PC-9 (cell line): ENCODE measurements at regions of chr9 and their contacts with region 1.

Region 1: GRCh38 chr9:121350993-121351561 is 19.0 kb downstream of the STOM start:
- DNase-seq: peak; percentile 72 to 77
- H3K4me3 ChIP-seq: no peak overlapping the region
- H3K27ac ChIP-seq: peak overlapping the region; percentile 35; the same call in 1 of the 2 replicates
- H3K4me1 ChIP-seq: peaks cover 15% of the 10 kb centered on the region
- H3K27me3 ChIP-seq: no peaks in the 10 kb centered on the region
- CTCF ChIP-seq: no peak

Region 2: GRCh38 chr9:121233906-121234901 is 116.9 kb before region 1 on chr9:
- CTCF ChIA-PET with region 1: no interaction called
- POLR2A ChIA-PET with region 1: no interaction called
- intact Hi-C with region 1: loop called (anchors 1 kb)
- DNase-seq: peak; percentile 78 to 97
- H3K4me3 ChIP-seq: no peak overlapping the region
- H3K27ac ChIP-seq: peak overlapping the region; percentile 94
- H3K4me1 ChIP-seq: peaks cover 32% of the 10 kb centered on the region
- H3K27me3 ChIP-seq: no peaks in the 10 kb centered on the region
- CTCF ChIP-seq: no peak

Region 3: GRCh38 chr9:121376214-121376830 is 25.2 kb after region 1 on chr9:
- CTCF ChIA-PET with region 1: interaction called, 12 read pairs
- POLR2A ChIA-PET with region 1: interaction called, 4 read pairs
- intact Hi-C with region 1: no loop called
- DNase-seq: no peak
- H3K4me3 ChIP-seq: no peak overlapping the region
- H3K27ac ChIP-seq: no peak overlapping the region
- H3K4me1 ChIP-seq: peaks cover 23% of the 10 kb centered on the region
- H3K27me3 ChIP-seq: no peaks in the 10 kb centered on the region
- CTCF ChIP-seq: peak; percentile 63

Region 4: GRCh38 chr9:121566481-121567465 is 215.7 kb after region 1 on chr9:
- CTCF ChIA-PET with region 1: no interaction called
- POLR2A ChIA-PET with region 1: no interaction called
- intact Hi-C with region 1: no loop called
- DNase-seq: no peak
- H3K4me3 ChIP-seq: no peak overlapping the region
- H3K27ac ChIP-seq: no peak overlapping the region
- H3K4me1 ChIP-seq: peaks cover 16% of the 10 kb centered on the region
- H3K27me3 ChIP-seq: no peaks in the 10 kb centered on the region; the same call in 1 of the 2 replicates
- CTCF ChIP-seq: no peak